Cardiac septum (tissue), 1 donor: ENCODE measurements at regions of chr4 and their contacts with region 1.

Region 1: DNA sequence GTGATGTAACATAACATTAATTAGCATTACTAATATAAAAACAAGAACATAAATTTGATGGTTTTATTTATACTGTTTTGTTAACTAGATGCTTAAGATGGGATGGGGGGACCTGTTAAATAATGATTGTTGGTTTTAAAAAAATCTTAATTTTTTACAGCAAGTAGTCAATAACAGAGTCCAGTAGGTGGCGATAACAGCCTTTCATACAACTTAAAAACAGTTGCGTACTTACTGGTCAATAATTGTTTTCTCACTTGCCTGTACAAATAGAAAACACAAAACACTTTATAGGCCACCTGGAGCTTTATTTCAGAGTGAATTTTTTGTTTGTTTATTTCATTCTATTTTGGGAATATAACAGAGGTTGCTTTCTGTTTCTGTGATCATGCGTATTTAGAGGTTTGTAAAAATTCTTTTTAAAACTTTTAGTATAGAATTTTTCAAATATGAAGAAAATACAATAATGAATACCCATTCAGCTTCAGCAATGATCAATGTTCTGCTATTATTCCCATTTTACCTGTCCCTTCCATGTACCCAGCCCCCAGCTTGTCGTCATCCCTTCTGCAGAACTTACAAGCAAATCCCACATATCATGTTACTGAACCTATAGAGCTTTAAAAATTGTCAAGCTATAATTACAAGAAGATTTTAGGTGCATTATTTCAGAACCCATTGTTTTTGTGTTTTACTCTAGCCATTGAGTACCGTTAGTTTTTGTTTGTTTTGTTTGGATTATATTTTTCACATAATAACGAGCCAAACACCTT is 97.1 kb downstream of the MRPL1 start:
- DNase-seq: no peak

Region 2: DNA sequence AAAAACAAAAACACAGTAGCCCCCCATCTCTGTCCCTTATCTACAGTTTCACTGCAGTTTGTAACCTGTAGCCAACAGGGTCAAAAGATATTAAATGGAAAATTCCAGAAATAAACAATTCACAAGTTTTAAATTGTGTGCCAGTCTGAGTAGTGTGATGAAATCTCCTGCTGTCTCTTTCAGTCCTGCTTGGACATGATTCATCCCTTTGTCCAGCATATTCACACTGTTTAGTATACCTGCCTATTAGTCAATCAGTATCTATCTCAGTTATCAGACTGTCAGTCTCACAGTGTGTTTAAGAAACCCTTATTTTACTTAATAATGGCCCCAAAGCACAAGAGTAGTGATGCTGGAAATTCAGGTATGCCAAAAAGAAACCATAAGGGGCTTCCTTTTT is 162.5 kb before region 1 on chr4:
- intact Hi-C with region 1: no loop called
- DNase-seq: no peak

Region 3: DNA sequence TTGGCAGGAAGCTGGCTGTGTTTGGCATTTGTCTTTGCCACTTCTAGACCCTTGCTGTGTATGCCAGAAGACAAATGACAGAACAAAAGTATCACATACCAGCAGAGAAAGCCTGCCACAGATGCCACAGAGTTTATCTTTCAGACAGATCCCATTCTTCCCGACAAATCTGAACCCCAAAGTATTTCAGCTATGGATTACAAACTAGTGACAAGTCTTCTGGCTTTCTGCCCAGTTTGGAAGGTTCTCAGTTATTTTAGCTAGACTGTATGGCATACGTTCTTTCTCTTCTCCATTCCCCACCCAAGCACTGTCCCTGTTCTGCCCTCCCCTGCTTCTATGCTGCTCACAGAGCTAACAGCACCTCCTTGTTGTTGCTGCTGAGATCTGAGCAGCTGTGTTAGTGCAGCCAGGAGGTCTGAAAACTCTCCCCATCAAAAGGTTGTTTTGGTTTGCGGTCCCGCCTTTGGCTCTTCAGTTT is 334.1 kb after region 1 on chr4:
- intact Hi-C with region 1: loop called (anchors 10 kb)
- DNase-seq: no peak